ENCODE measurements at regions of chr19 and their contacts with region 1.

Region 1: DNA sequence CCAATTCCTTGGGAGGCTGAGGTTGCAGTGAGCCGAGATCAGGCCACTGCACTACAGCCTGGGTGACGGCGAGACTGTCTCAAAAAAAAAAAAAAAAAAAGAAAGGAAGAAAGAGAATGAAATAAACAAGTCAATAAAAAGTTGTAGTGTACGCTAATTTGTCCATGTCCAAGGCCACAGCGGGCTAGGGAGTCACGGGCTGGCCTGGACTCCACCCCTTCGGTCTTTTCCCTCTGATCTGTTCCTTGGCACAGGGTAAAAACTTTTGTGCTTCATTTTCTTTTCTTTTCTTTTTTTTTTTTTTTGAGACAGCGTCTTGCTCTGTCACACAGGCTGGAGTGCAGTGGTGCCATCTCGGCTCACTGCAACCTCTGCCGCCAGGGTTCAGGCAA is 19.4 kb upstream of the MKNK2 start:
- DNase-seq: peak; percentile 55 to 76 (median 68)
- ATAC-seq: peak; percentile 61
- H3K4me3 ChIP-seq: no peak overlapping the region
- H3K4me1 ChIP-seq: peaks cover 34% of the 10 kb centered on the region
- CTCF ChIP-seq: no peak

Region 2: GRCh38 chr19:1929021-1929742 is 141.2 kb before region 1 on chr19:
- intact Hi-C with region 1: loop called in 1 of 2 experiments (anchors 10 kb)
- DNase-seq: peak; percentile 84 to 89 (median 88)
- ATAC-seq: peak; percentile 96
- H3K4me3 ChIP-seq: no peak overlapping the region
- H3K4me1 ChIP-seq: peaks cover 12% of the 10 kb centered on the region
- CTCF ChIP-seq: peak; percentile 89

Measured in mucosa of descending colon (tissue), 3 donors.